T-cell (primary cell): ENCODE measurements at regions of chr12 and their contacts with region 1.

Region 1: DNA sequence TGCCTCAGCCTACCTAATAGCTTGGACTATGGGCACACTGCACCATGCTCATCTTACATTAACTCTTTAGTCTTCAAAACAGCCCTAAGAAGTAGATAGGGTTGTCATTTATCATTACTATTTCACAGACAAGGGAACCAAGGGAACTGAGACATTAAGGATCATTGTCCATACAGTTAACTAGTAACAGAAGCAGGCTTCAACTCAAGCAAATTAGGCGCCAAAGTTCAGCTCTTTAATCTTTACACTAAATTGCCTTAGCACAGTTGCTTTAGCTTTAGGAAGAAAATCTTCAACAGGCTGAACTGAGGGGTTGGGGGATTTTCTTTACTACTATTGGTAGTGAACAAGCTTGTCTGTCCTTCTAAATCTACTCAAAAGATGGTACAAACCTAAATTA is 68.8 kb upstream of the CAND1 start:
- DNase-seq: no peak
- ATAC-seq: no peak
- H3K4me3 ChIP-seq: no peak overlapping the region
- H3K4me3 Mint-ChIP-seq: no peak overlapping the region
- H3K27ac ChIP-seq: no peak overlapping the region
- H3K27ac Mint-ChIP-seq: no peak overlapping the region
- H3K4me1 ChIP-seq: no peaks in the 10 kb centered on the region
- H3K4me1 Mint-ChIP-seq: no peaks in the 10 kb centered on the region
- H3K27me3 ChIP-seq: peaks cover 0 to 3% of the 10 kb centered on the region in 2 experiments
- H3K27me3 Mint-ChIP-seq: peaks cover 21 to 35% of the 10 kb centered on the region in 2 donors

Region 2: DNA sequence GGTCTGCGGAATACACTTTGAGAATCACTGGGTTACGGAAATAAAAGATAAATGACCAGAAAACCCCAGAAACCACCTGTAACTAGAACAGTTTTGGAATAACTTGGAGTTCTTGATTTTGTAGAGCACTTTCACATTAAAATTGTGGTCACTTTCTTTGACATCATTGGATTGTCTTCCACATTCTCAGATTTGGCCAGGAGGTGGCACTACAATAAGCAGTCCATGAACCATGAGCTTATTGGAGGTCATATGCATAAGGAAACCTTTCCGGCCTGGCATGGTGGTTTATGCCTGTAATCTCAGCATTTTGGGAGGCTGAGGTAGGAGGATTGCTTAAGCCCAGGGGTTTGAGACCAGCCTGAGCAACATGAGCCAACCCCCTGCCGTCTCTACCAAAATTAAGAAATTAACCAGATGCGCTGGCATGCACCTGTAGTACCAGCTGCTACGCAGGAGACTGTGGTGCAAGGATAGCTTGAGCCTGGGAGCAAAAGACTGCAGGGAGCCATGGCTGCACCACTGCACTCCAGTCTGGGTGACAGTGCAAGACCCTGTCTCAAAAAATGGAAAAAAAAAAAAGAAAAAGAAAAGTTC is 39.0 kb before region 1 on chr12:
- CTCF ChIA-PET with region 1: interaction called in 1 of 2 experiments, 13 read pairs
- POLR2A ChIA-PET with region 1: no interaction called
- DNase-seq: peak in 25 of 35 experiments; percentile 0 to 51 (median 10)
- ATAC-seq: no peak
- H3K4me3 ChIP-seq: no peak overlapping the region
- H3K4me3 Mint-ChIP-seq: no peak overlapping the region
- H3K27ac ChIP-seq: no peak overlapping the region
- H3K27ac Mint-ChIP-seq: no peak overlapping the region
- H3K4me1 ChIP-seq: no peaks in the 10 kb centered on the region
- H3K4me1 Mint-ChIP-seq: no peaks in the 10 kb centered on the region
- H3K27me3 ChIP-seq: peaks cover 0 to 2% of the 10 kb centered on the region in 2 experiments
- H3K27me3 Mint-ChIP-seq: peaks cover 4 to 17% of the 10 kb centered on the region in 2 donors